ENCODE measurements at regions of chr17 and their contacts with region 1.

Region 1: GRCh38 chr17:48024937-48025906 is 12.4 kb downstream of the COPZ2 start:
- DNase-seq: peak; percentile 99
- H3K4me3 ChIP-seq: peak overlapping the region; percentile 78
- H3K27ac ChIP-seq: peak overlapping the region; percentile 98
- H3K4me1 ChIP-seq: peaks cover 27% of the 10 kb centered on the region
- H3K27me3 ChIP-seq: no peaks in the 10 kb centered on the region

Region 2: GRCh38 chr17:48074315-48075081 is 49.3 kb after region 1 on chr17:
- in situ Hi-C with region 1: loop called (anchors 5 kb)
- DNase-seq: peak; percentile 92
- H3K4me3 ChIP-seq: no peak overlapping the region
- H3K27ac ChIP-seq: peak overlapping the region; percentile 89
- H3K4me1 ChIP-seq: peaks cover 15% of the 10 kb centered on the region
- H3K27me3 ChIP-seq: no peaks in the 10 kb centered on the region

Measured in GM23248 (cell line).